HCT116 (cell line): ENCODE measurements at regions of chr2 and their contacts with region 1.

Region 1: GRCh38 chr2:113889471-113890252 is at the start of gene ACTR3:
- DNase-seq: peak; percentile 95
- ATAC-seq: peak; percentile 90
- H3K4me3 ChIP-seq: peak within 1 kb of the TSS; percentile 73 to 86
- H3K27ac ChIP-seq: peak within 1 kb of the TSS; percentile 82
- H3K4me1 ChIP-seq: peaks cover 39 to 53% of the 10 kb centered on the region in 2 experiments
- H3K27me3 ChIP-seq: no peaks in the 10 kb centered on the region
- CTCF ChIP-seq: no peak
- POLR2A ChIP-seq: peak; percentile 97
- RAD21 ChIP-seq: 0 out of 2 replicates have a peak, but pooled peaks have one; percentile 21
- total RNA-seq, gene ACTR3: 232 TPM

Region 2: GRCh38 chr2:113877711-113878598 is 11.7 kb before region 1 on chr2:
- CTCF ChIA-PET with region 1: interaction called, 4 read pairs
- POLR2A ChIA-PET with region 1: interaction called, 5 read pairs
- RAD21 ChIA-PET with region 1: no interaction called
- intact Hi-C with region 1: loop called (anchors 1 kb)
- DNase-seq: peak; percentile 85
- ATAC-seq: peak; percentile 72
- H3K4me3 ChIP-seq: peak overlapping the region in 1 of 2 experiments; percentile 44; a peak in 3 of 4 replicates
- H3K27ac ChIP-seq: peak overlapping the region; percentile 79
- H3K4me1 ChIP-seq: peaks cover 36 to 39% of the 10 kb centered on the region in 2 experiments
- H3K27me3 ChIP-seq: no peaks in the 10 kb centered on the region
- CTCF ChIP-seq: no peak
- POLR2A ChIP-seq: no peak
- RAD21 ChIP-seq: peak; percentile 25; the same call in 1 of the 2 replicates

Region 3: DNA sequence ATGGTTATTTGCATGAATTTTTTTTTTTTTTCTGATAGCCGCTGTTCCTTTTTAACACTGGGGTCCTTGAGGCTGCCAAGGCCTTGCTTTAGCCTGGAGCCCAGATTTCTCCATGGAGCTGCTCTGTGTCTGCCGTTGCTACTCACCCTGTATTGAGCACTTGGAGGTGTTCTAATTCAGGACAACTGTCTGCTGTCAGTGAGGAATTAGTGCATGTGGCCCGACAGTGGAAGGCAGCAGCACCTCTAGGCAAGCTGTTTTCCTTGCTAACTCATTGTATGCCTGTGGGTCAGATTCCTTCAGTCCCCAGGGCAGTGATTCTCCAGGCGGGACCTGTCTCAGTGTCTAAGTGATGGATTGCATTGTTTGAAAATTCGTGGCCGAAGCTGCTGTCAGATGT is 405.1 kb after region 1 on chr2:
- CTCF ChIA-PET with region 1: no interaction called
- POLR2A ChIA-PET with region 1: no interaction called
- RAD21 ChIA-PET with region 1: no interaction called
- intact Hi-C with region 1: no loop called
- DNase-seq: no peak
- ATAC-seq: no peak
- H3K4me3 ChIP-seq: no peak overlapping the region
- H3K27ac ChIP-seq: no peak overlapping the region
- H3K4me1 ChIP-seq: no peaks in the 10 kb centered on the region
- H3K27me3 ChIP-seq: no peaks in the 10 kb centered on the region
- CTCF ChIP-seq: no peak
- POLR2A ChIP-seq: no peak
- RAD21 ChIP-seq: no peak